Activated T-helper 1 cell treated with anti-CD3 and anti-CD28 coated beads, Interleukin-12 subunit alpha, Interleukin-12 subunit beta, Interleukin-2, Interleukin-4 antibody, amounts not matched to agents 30 ng/mL and 10 ng/mL and 1 ng/mL, durations not matched to agents 14 hours and 24 hours and 36 hours (primary cell): ENCODE measurements at regions of chr4 and their contacts with region 1.

Region 1: GRCh38 chr4:47562297-47562696 is 77.2 kb downstream of the ATP10D start:
- DNase-seq: no peak
- H3K4me3 Mint-ChIP-seq: no peak overlapping the region
- H3K27ac Mint-ChIP-seq: no peak overlapping the region
- H3K4me1 Mint-ChIP-seq: peaks cover 4% of the 10 kb centered on the region
- H3K27me3 Mint-ChIP-seq: no peaks in the 10 kb centered on the region

Region 2: GRCh38 chr4:47391256-47391655 is 171.0 kb before region 1 on chr4:
- intact Hi-C with region 1: loop called (anchors 10 kb)
- DNase-seq: no peak
- H3K4me3 Mint-ChIP-seq: no peak overlapping the region
- H3K27ac Mint-ChIP-seq: no peak overlapping the region
- H3K4me1 Mint-ChIP-seq: no peaks in the 10 kb centered on the region
- H3K27me3 Mint-ChIP-seq: peaks cover 6% of the 10 kb centered on the region

Region 3: DNA sequence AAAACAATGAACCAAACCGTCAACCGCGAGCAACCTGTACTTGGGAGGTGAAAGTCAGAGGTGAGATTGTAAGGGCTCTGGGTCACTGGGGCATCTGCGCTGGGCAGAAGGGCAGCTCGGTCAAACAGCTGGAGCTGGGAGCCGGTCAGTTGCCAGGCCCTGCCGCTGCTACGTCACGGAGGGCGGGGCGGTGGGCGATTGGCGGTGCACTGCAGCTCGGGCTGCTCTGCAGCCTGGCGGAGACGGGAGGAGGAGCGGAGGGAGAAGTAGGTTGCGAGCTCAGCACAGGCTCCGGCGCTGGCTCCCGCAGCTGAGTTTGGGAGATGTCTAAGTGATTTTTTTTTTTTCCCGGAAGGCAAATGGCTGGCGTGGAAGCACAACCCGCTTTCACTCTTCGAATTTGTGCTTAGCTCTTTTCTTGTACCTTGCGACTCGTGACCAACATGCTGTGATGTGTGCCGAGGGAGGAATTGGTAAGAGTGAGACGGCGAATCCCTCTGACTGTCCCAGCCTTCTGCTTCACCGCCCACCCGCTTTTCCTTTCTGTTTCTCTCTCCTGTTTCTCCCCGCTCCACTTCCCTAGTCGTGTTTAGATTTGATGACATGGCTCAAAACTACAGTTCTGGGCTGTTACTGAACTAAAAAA is 77.1 kb before region 1 on chr4 and contains the start of gene ATP10D:
- intact Hi-C with region 1: loop called (anchors 1 kb)
- DNase-seq: peak; percentile 72
- H3K4me3 Mint-ChIP-seq: peak within 1 kb of the TSS; percentile 92
- H3K27ac Mint-ChIP-seq: peak within 1 kb of the TSS; percentile 51
- H3K4me1 Mint-ChIP-seq: peaks cover 27% of the 10 kb centered on the region
- H3K27me3 Mint-ChIP-seq: peaks cover 9% of the 10 kb centered on the region
- total RNA-seq, gene ATP10D: 1.6 and 1.9 TPM in 2 replicates

Region 4: GRCh38 chr4:47490550-47490949 is 71.7 kb before region 1 on chr4:
- intact Hi-C with region 1: loop called (anchors 1 kb)
- DNase-seq: no peak
- H3K4me3 Mint-ChIP-seq: no peak overlapping the region
- H3K27ac Mint-ChIP-seq: no peak overlapping the region
- H3K4me1 Mint-ChIP-seq: peaks cover 14% of the 10 kb centered on the region
- H3K27me3 Mint-ChIP-seq: peaks cover 2% of the 10 kb centered on the region